ENCODE measurements at regions of chr17 and their contacts with region 1.

Region 1: GRCh38 chr17:42312285-42313130 is 24.2 kb downstream of the STAT5A start:
- DNase-seq: peak; percentile 69 to 90 (median 76)
- ATAC-seq: peak; percentile 65 to 86 (median 80)
- H3K4me3 ChIP-seq: no peak overlapping the region
- H3K27ac ChIP-seq: peak overlapping the region in 2 of 4 donors; percentile 33 to 44
- H3K4me1 ChIP-seq: peaks cover 0 to 1% (median 0%) of the 10 kb centered on the region in 3 donors
- H3K27me3 ChIP-seq: no peaks in the 10 kb centered on the region
- CTCF ChIP-seq: peak in 3 of 4 donors; percentile 14 to 24 (median 19)

Region 2: DNA sequence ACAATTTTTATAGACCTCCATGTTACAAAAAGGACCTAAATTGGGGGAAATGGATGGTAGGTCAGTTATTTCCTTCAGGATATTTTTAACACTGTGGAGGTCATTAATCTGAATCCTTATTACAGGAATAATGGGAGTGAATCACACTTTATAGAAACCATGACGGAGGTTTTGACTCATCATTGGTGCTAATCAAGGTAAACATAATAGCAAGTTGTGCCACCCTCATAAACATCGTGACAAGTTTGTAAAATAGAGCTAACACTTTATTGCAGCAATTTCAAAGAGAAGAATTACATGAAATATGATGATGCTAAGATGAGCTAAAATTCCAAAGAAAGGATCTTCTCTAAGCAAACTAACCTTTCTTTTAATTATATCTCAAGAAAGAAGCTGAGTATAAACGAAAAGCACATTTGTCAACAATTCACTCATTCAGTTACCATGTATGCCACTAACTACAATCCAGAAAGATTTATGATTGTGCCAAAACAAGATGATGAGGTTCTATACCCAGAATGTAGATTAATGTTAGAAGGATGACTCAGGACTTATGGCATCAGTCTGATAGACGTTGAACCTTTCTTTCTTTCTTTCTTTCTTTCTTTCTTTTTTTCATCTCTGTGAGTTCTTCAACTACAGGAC is 59.9 kb before region 1 on chr17:
- intact Hi-C with region 1: no loop called
- DNase-seq: no peak
- ATAC-seq: no peak
- H3K4me3 ChIP-seq: no peak overlapping the region
- H3K27ac ChIP-seq: no peak overlapping the region
- H3K4me1 ChIP-seq: peaks cover 4 to 15% (median 7%) of the 10 kb centered on the region in 3 donors
- H3K27me3 ChIP-seq: no peaks in the 10 kb centered on the region
- CTCF ChIP-seq: no peak

Region 3: GRCh38 chr17:42266918-42267778 is 45.4 kb before region 1 on chr17:
- intact Hi-C with region 1: no loop called
- DNase-seq: no peak
- ATAC-seq: peak in 1 of 4 donors; percentile 45
- H3K4me3 ChIP-seq: no peak overlapping the region
- H3K27ac ChIP-seq: no peak overlapping the region
- H3K4me1 ChIP-seq: no peaks in the 10 kb centered on the region
- H3K27me3 ChIP-seq: no peaks in the 10 kb centered on the region
- CTCF ChIP-seq: no peak

Region 4: DNA sequence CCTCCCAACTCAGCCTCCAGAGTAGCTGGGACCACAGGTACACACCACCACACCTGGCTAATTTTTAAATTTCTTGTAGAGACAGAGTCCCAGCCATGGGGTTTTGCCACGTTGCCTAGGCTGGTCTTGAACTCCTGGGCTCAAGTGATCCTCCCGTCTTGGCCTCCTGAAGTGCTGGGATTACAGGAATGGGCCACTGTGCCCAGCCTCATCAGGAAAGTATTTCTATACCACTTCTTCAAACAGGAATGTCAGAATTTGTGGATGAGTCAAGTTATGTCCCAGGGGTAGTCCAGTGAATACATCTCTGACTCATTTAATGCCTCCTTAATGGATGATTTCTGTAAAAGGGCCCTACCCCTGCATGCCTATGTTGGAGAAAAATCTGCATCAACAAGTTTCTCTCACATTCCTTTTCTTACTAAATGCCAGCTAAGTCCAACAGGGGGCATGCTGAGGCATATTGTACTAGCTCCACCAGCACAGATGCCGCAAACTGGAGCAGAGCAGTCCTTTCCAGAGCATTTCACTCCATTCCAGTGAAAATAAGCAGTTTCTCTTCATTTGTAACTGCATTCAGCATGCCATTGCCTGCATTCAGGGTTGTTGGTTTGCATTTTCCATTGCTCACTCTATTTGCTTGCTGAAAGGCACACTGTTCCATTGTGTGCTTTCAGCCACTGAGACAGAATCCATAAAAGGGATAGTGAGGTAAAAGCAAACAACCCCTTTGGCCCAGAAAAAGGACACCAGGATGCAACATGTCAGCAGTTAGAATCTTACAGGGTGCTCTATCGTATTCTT is 115.8 kb after region 1 on chr17:
- intact Hi-C with region 1: no loop called
- DNase-seq: peak in 1 of 6 donors; percentile 50
- ATAC-seq: peak; percentile 68 to 85 (median 85)
- H3K4me3 ChIP-seq: no peak overlapping the region
- H3K27ac ChIP-seq: no peak overlapping the region
- H3K4me1 ChIP-seq: peaks cover 0 to 6% (median 6%) of the 10 kb centered on the region in 3 donors
- H3K27me3 ChIP-seq: no peaks in the 10 kb centered on the region
- CTCF ChIP-seq: peak; percentile 27 to 52 (median 38)

Region 5: DNA sequence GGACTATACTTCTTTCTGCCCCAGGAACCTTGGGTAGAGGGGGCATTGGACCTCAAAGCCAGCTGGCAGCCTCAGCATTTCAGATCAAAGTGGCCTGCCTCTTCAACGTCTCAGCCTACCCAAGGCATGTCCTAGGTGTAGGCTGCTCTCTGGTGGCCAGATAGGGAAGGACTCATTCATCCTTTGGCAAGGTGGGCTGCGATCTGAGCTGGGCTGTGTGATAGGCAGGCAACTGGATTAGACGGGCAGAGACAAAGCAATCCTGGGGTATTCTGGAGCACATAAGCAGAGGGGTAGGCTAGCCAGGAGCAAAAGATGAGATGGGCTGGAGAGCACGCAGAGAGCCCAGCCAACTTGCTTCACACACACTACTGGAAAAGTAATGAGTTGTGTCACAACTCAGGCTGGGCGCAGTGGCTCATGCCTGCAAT is 214.8 kb after region 1 on chr17:
- intact Hi-C with region 1: loop called in 1 of 3 experiments (anchors 10 kb)
- DNase-seq: peak in 3 of 6 donors; percentile 51 to 78 (median 57)
- ATAC-seq: peak; percentile 53 to 74 (median 68)
- H3K4me3 ChIP-seq: no peak overlapping the region
- H3K27ac ChIP-seq: no peak overlapping the region
- H3K4me1 ChIP-seq: peaks cover 9 to 21% (median 14%) of the 10 kb centered on the region in 3 donors
- H3K27me3 ChIP-seq: no peaks in the 10 kb centered on the region
- CTCF ChIP-seq: peak; percentile 65 to 74 (median 67)